ENCODE measurements at regions of chr1 and their contacts with region 1.

Region 1: DNA sequence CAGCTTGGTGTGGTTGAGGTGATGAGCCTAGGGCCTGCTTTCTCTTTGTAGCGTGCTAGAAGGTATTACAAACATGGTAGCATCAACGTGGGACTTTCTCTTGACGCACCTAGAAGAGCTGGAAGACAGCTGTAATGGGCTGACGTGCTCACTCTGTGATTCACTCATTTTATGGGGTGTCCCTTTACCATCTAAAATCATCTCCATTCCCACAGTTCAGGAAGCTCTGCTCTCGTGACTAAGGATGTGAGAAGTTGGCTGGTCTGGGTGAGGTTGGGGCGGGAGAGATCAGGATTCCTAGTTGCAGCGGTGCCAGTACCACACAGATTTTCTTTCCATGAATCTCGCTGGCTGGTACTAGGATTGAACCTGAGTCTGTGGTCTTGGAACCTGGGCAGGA is 4.2 kb downstream of the HTR6 start:
- DNase-seq: no peak
- H3K4me3 ChIP-seq: no peak overlapping the region
- H3K27ac ChIP-seq: no peak overlapping the region
- H3K4me1 ChIP-seq: no peaks in the 10 kb centered on the region; a peak in 3 of 7 replicates
- H3K27me3 ChIP-seq: peaks cover 27 to 40% (median 34%) of the 10 kb centered on the region in 4 experiments
- CTCF ChIP-seq: no peak
- EP300 ChIP-seq: no peak
- POLR2A ChIP-seq: no peak
- RAD21 ChIP-seq: no peak

Region 2: GRCh38 chr1:19682257-19682656 is 13.4 kb after region 1 on chr1:
- CTCF ChIA-PET with region 1: interaction called, 46 read pairs
- POLR2A ChIA-PET with region 1: interaction called, 4 read pairs
- DNase-seq: no peak
- H3K4me3 ChIP-seq: no peak overlapping the region
- H3K27ac ChIP-seq: no peak overlapping the region
- H3K4me1 ChIP-seq: peaks cover 0 to 14% (median 8%) of the 10 kb centered on the region in 4 experiments; a peak in 4 of 7 replicates
- H3K27me3 ChIP-seq: no peaks in the 10 kb centered on the region
- CTCF ChIP-seq: no peak
- EP300 ChIP-seq: no peak
- POLR2A ChIP-seq: no peak
- RAD21 ChIP-seq: no peak